ENCODE measurements at regions of chr16 and their contacts with region 1.

Region 1: DNA sequence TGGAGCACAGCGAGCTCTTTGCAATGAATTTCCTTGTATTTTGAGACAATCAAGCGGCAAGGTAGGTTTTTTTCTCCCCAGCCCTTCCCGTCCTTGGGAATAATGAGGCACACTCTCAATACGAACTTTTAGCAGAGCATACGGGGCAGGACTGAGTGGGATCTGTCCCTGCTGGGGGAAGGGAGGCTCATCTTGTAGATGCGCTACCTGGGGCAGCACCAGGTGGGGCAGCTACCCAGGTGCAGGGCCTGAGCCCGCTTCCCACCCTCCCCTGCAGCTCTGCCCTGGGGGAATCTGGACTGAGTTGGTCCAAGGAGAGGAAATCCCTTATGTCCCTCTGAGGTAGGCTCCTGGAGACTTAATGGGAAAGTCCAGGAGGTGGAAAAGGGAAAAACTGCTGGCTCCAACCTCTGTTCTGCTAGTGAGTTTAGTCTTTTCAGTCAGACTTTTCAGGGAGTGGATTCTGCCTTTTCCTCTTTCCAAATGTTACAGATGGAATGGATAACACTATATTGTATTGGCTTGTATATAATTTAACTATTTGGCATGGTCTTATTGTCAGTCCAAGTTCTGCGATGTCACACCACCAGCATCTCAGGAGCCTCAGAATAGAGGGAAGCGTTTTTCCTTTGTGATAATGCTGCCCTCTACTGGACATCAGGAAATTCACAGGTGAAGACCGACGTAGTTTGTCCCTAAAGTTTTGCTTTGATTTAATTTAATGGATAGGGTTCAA is 9.6 kb upstream of the CES1 start:
- DNase-seq: no peak
- ATAC-seq: peak; percentile 55 to 69
- H3K4me3 ChIP-seq: no peak overlapping the region
- H3K27ac ChIP-seq: no peak overlapping the region
- H3K4me1 ChIP-seq: no peaks in the 10 kb centered on the region
- H3K27me3 ChIP-seq: peaks cover 0 to 10% (median 3%) of the 10 kb centered on the region in 3 donors
- CTCF ChIP-seq: peak; percentile 57 to 75 (median 61)
- POLR2A ChIP-seq: no peak

Region 2: DNA sequence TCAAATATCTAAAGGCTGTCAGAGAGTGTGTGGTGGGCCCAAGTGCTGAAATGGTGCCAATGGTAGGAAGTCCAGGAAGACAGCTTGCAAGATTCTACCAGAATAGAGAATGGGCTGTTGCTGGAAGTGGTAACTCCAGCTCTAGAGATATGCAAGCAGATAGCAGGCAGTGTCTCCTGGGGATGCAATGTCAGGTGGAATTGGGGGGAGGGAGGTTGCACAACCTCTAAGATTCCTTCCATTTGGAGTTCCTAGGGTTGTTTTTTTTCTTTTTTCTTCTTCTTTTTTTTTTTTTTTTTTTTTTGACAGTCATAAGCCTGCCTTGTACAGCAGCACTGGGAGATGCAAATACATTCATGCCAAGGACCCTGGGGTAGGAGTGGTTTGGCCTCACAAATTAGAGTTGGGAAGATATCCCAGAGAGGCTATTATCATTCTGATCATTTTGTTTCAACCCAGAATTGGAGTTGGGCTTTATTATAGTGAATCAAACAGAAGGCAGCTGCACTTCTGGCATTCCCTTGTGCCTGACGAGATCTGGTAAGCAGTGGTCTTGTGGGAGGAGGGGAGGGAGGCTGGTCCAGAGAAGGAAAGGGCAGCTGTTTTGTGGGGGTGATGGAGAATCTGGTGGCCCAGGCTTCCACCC is 135.7 kb before region 1 on chr16:
- in situ Hi-C with region 1: loop called in 3 of 4 experiments (anchors 5 kb)
- intact Hi-C with region 1: loop called (anchors 1 kb)
- DNase-seq: no peak
- ATAC-seq: peak in 1 of 2 donors; percentile 50
- H3K4me3 ChIP-seq: no peak overlapping the region
- H3K27ac ChIP-seq: no peak overlapping the region
- H3K4me1 ChIP-seq: no peaks in the 10 kb centered on the region
- H3K27me3 ChIP-seq: no peaks in the 10 kb centered on the region
- CTCF ChIP-seq: no peak
- POLR2A ChIP-seq: no peak

Region 3: DNA sequence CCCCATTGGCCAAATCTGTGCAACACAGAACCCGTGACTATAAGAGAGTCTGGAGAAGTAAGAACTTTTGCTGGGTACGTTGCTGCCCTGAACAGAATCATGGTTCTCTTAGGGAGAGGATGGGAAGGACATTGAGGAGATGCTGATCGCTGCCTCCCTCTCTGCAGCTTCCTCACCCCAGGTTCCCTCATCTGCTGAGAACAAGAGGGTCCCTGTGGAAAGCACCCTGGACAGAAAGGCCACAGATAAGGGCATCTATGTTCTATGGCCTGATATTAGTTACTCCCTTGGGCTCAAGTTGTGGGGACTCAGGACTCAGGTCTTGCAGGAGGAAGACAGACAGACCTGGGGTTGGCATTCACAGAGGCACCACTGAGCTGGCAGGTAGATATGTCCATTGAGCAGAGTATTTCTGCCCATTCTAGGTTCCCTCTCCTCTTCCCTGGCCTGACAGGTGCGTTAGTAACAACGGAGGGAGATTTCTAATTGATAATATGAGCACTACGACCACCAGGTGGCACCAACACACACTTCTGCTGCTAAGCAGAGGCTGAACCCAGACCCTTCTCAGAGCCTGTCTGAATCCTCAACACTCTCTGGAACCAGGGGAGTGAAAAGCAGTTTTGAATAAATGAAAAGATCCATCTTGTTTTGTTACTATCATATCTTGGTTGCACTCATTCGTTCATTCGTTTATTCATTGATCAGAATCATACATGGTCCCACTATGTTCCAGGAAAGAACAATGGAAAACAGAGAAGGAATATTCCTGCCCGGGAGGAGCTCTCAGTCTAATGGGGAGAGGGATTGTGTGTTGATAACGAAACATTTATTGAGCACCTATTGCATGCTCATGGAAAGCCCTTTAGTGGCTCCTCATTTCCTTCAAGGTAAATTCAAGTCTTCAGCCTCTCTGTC is 130.3 kb before region 1 on chr16:
- in situ Hi-C with region 1: loop called (anchors 5 kb)
- intact Hi-C with region 1: loop called (anchors 1 kb)
- DNase-seq: peak in 1 of 2 donors; percentile 30
- ATAC-seq: peak in 1 of 2 donors; percentile 74
- H3K4me3 ChIP-seq: no peak overlapping the region
- H3K27ac ChIP-seq: no peak overlapping the region
- H3K4me1 ChIP-seq: no peaks in the 10 kb centered on the region
- H3K27me3 ChIP-seq: no peaks in the 10 kb centered on the region
- CTCF ChIP-seq: peak; percentile 42 to 67 (median 59)
- POLR2A ChIP-seq: no peak

Region 4: GRCh38 chr16:55717326-55717725 is 125.2 kb before region 1 on chr16:
- in situ Hi-C with region 1: loop called in 2 of 4 experiments (anchors 5 kb)
- intact Hi-C with region 1: loop called (anchors 1 kb)
- DNase-seq: no peak
- ATAC-seq: no peak
- H3K4me3 ChIP-seq: no peak overlapping the region
- H3K27ac ChIP-seq: no peak overlapping the region
- H3K4me1 ChIP-seq: no peaks in the 10 kb centered on the region
- H3K27me3 ChIP-seq: no peaks in the 10 kb centered on the region
- CTCF ChIP-seq: no peak
- POLR2A ChIP-seq: no peak

Region 5: GRCh38 chr16:55912022-55912421 is 69.5 kb after region 1 on chr16:
- in situ Hi-C with region 1: no loop called
- intact Hi-C with region 1: no loop called
- DNase-seq: peak in 1 of 2 donors; percentile 58
- ATAC-seq: peak; percentile 90 to 99
- H3K4me3 ChIP-seq: peak overlapping the region in 2 of 4 donors; percentile 22 to 25
- H3K27ac ChIP-seq: peak overlapping the region; percentile 72 to 77 (median 74)
- H3K4me1 ChIP-seq: peaks cover 5 to 9% of the 10 kb centered on the region in 2 donors
- H3K27me3 ChIP-seq: no peaks in the 10 kb centered on the region
- CTCF ChIP-seq: no peak
- POLR2A ChIP-seq: peak in 1 of 2 donors; percentile 50